Panc1 (cell line): ENCODE measurements at regions of chr2 and their contacts with region 1.

Region 1: DNA sequence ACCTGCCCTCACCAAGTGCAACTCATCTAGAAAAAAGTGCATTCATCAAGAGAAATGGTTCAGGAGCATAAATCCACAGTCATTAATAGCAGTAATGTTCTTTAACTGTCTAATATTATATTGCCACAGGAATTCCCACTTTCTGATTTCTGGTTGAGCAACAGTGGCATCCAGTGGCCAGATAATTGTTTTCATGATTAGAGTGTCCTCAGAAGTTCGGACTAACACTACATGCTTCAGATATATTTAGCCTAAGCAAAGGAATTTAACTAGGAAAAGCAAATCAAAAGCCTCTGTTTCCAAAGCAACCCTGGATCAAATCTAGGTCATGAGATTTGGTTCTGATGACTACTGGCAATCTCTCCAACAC is 9.8 kb upstream of the ERBB4 start:
- DNase-seq: no peak
- ATAC-seq: peak; percentile 71; the same call in 1 of the 2 replicates
- H3K4me3 ChIP-seq: no peak overlapping the region
- H3K27ac ChIP-seq: no peak overlapping the region
- H3K4me1 ChIP-seq: no peaks in the 10 kb centered on the region
- H3K27me3 ChIP-seq: no peaks in the 10 kb centered on the region
- CTCF ChIP-seq: peak; percentile 48; the same call in 1 of the 2 replicates

Region 2: GRCh38 chr2:211745295-211746097 is 802.9 kb before region 1 on chr2:
- CTCF ChIA-PET with region 1: no interaction called
- POLR2A ChIA-PET with region 1: no interaction called
- in situ Hi-C with region 1: no loop called
- intact Hi-C with region 1: loop called (anchors 5 kb)
- DNase-seq: peak; percentile 43
- ATAC-seq: peak; percentile 94
- H3K4me3 ChIP-seq: no peak overlapping the region
- H3K27ac ChIP-seq: no peak overlapping the region
- H3K4me1 ChIP-seq: no peaks in the 10 kb centered on the region
- H3K27me3 ChIP-seq: no peaks in the 10 kb centered on the region
- CTCF ChIP-seq: peak; percentile 88

Region 3: GRCh38 chr2:212147921-212148513 is 400.4 kb before region 1 on chr2:
- CTCF ChIA-PET with region 1: no interaction called
- POLR2A ChIA-PET with region 1: no interaction called
- in situ Hi-C with region 1: no loop called
- intact Hi-C with region 1: loop called (anchors 10 kb)
- DNase-seq: no peak
- ATAC-seq: no peak
- H3K4me3 ChIP-seq: no peak overlapping the region
- H3K27ac ChIP-seq: no peak overlapping the region
- H3K4me1 ChIP-seq: no peaks in the 10 kb centered on the region
- H3K27me3 ChIP-seq: no peaks in the 10 kb centered on the region
- CTCF ChIP-seq: peak; percentile 43; the same call in 1 of the 2 replicates